ENCODE measurements at regions of chrX and their contacts with region 1.

Region 1: DNA sequence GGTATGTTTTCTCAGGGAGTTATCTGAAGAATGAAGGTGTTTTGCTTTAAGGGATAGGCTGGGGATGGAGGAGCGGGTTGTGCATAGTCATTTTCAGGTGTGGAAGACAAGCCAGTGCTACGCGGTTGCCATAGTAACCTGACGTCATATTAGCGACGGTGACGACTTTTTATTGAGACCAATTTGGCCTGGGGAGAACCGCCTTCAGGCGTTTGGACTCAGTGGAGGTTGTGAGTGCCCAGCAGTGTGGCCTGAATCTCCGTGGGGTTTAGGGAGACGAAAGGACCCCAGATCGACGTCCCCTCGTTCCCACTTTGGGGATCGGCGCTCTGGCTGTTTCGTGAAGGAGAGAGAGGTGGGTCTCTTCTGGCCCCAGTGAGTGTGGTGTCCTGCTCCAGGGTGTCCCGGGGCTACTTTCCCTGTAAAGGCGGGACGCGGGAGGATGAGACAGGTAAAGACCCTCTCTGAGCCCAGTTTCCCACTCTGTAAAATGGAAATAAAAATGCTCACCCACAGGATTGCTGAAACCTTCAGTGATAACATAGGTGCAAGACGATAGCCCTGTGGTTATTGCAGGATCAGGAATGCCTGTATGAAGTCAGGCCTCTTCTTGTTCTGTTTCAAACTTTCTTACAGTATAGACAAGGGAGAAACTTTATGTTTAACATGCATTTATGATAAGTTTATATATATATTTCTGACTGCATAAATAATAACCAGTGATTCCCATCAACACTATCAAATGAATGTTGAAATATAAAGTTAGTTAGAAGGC is 48.6 kb downstream of the GPRASP3 start:
- DNase-seq: peak; percentile 86
- ATAC-seq: peak; percentile 89
- H3K4me3 Mint-ChIP-seq: peak overlapping the region; percentile 80
- H3K27ac Mint-ChIP-seq: peak overlapping the region; percentile 94
- H3K4me1 Mint-ChIP-seq: peaks cover 10% of the 10 kb centered on the region
- H3K27me3 Mint-ChIP-seq: no peaks in the 10 kb centered on the region

Region 2: GRCh38 chrX:102606123-102606522 is 163.1 kb before region 1 on chrX:
- CTCF ChIA-PET with region 1: no interaction called
- POLR2A ChIA-PET with region 1: no interaction called
- intact Hi-C with region 1: no loop called
- DNase-seq: no peak
- ATAC-seq: no peak
- H3K4me3 Mint-ChIP-seq: no peak overlapping the region
- H3K27ac Mint-ChIP-seq: no peak overlapping the region
- H3K4me1 Mint-ChIP-seq: peaks cover 28% of the 10 kb centered on the region
- H3K27me3 Mint-ChIP-seq: no peaks in the 10 kb centered on the region

Region 3: DNA sequence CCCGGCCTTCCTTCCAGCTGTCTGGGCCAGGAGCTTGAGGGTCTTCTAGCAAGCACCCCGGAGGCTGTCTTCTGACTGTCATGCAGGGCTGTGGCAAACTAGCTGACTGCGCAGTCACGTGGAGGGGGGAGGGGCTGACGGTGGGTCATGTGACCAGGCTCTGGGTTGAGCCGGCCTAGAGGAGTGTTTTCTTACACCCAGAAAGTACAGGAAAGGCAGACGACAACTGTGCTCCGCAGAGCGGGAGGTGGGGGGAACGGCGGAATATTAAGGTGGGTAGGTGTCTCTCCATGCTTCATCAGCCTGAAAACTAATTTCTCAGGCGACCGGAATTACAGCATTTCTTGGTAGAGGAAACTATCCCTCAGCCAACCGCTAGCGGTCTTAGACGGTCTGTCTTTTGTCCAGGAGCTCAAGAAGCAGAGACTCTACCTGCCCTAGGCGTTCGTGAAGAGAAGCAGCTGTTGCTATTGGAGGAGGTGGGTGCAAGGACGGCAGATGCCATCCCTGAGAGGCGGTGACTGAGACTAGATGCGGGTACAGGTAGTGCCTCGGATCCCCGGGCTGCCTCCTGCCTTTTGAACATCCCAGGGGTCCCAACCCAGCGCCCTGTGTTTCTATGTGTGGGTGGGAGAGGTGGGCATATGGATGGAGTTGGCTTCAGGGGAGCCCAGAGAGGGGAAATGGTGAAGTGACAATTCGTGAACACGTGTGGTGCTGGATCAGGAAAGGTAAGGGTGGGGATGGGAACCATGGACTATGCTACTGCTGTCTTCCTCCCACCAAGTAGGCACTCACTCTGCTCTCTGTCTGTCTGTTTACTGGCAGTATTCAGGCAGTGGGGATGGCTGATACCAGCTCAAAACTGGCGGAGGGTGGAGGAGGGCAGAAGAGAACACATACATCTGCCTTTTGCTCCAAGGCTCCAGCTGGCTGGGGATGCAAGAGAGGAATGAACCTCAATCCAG is 109.1 kb before region 1 on chrX:
- CTCF ChIA-PET with region 1: no interaction called
- POLR2A ChIA-PET with region 1: no interaction called
- intact Hi-C with region 1: loop called in 1 of 2 experiments (anchors 5 kb)
- DNase-seq: peak; percentile 91
- ATAC-seq: peak; percentile 99
- H3K4me3 Mint-ChIP-seq: peak overlapping the region; percentile 87
- H3K27ac Mint-ChIP-seq: peak overlapping the region; percentile 92
- H3K4me1 Mint-ChIP-seq: peaks cover 23% of the 10 kb centered on the region
- H3K27me3 Mint-ChIP-seq: no peaks in the 10 kb centered on the region

Region 4: DNA sequence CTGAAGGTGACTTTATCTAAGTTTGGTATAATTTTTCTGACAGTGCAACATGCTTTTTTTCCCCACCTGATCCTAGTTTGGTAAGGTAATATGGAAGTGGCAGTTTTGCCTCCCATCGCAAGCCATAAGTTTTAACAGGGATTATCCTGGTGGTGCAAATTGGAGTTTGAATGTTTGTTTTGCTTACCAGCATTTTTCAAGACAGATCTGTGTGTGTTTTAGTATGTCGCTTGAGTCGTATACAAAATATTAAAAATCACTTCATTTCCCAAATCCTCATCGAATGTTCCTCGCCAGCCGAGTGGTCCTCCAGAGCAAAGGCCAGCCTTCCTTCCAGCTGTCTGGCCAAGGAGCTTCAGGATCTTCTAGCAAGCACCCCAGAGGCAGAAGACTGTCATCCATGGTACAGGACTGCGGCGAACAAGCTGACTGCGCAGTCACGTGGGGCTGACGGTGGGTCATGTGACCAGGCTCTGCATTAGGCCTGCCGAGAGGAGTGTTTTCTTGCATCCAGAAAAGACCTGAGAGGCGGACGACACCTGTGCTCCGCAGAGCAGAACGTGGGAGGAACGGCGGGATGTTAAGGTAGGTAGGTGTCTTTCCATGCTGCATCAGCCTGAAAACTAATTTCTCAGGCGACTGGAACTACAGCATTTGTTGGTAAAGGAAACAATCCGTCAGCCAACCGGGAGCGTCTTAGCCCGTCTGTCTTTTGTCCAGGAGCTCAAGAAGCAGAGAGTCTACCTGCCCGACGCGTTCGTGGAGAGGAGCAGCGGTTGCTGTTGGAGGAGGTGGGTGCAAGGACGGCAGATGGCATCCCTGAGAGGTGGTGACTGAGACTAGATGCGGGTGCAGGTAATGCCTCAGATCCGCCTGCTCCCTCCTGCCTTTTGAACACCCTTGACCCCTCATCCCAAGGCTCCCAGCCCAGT is 48.7 kb before region 1 on chrX and contains the start of gene GPRASP3:
- CTCF ChIA-PET with region 1: no interaction called
- POLR2A ChIA-PET with region 1: no interaction called
- intact Hi-C with region 1: loop called in 1 of 2 experiments (anchors 2 kb)
- DNase-seq: peak; percentile 89
- ATAC-seq: peak; percentile 100
- H3K4me3 Mint-ChIP-seq: peak within 1 kb of the TSS; percentile 85
- H3K27ac Mint-ChIP-seq: peak within 1 kb of the TSS; percentile 79
- H3K4me1 Mint-ChIP-seq: peaks cover 7% of the 10 kb centered on the region
- H3K27me3 Mint-ChIP-seq: no peaks in the 10 kb centered on the region
- total RNA-seq, gene GPRASP3: 1.0 to 1.8 TPM

Region 5: GRCh38 chrX:102863735-102864134 is 94.6 kb after region 1 on chrX:
- CTCF ChIA-PET with region 1: no interaction called
- POLR2A ChIA-PET with region 1: no interaction called
- intact Hi-C with region 1: loop called in 1 of 2 experiments (anchors 5 kb)
- DNase-seq: peak; percentile 86
- ATAC-seq: peak; percentile 78
- H3K4me3 Mint-ChIP-seq: no peak overlapping the region
- H3K27ac Mint-ChIP-seq: no peak overlapping the region
- H3K4me1 Mint-ChIP-seq: no peaks in the 10 kb centered on the region
- H3K27me3 Mint-ChIP-seq: no peaks in the 10 kb centered on the region

Region 6: GRCh38 chrX:102934624-102935023 is 165.4 kb after region 1 on chrX:
- CTCF ChIA-PET with region 1: no interaction called
- POLR2A ChIA-PET with region 1: no interaction called
- intact Hi-C with region 1: no loop called
- DNase-seq: peak; percentile 51
- ATAC-seq: no peak
- H3K4me3 Mint-ChIP-seq: no peak overlapping the region
- H3K27ac Mint-ChIP-seq: no peak overlapping the region
- H3K4me1 Mint-ChIP-seq: no peaks in the 10 kb centered on the region
- H3K27me3 Mint-ChIP-seq: no peaks in the 10 kb centered on the region